Left colon (tissue), 2 donors: ENCODE measurements at regions of chr6 and their contacts with region 1.

Region 1: GRCh38 chr6:28981833-28982475 is 23.2 kb downstream of the ZNF311 start:
- DNase-seq: peak; percentile 79 to 80
- ATAC-seq: peak; percentile 56

Region 2: DNA sequence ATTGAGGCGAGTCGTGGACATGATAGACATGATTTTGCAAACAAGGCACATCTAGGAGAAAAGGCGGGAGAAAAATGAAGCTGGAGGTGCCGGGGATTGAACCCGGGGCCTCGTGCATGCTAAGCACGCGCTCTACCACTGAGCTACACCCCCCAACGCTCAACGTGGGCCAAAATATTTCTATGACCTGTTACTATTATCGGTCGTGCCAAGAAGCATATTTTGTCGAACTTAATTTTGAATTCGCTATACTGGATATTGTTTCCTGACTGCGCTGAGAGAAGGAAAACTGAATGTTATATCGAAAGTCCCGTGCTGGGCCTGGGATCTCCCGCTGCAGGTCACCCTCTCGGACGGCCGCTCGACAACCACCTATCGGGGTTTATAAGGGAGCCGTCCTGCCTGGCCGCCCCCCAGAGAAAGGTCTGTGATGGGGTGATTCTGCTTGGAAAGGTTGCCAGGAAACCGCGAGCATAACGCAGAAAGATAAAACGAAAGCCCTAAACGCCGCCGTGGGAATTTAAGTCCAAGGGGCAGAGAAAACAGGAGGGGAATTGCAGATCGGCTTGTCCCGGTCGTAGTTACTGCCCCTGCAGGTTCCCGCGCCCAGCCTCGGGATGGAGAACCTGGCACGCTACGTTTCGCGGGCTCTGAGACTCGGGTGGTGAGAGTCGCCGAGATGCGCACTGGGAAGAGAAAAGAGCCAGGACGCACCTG is 118.2 kb before region 1 on chr6:
- intact Hi-C with region 1: no loop called
- DNase-seq: peak; percentile 39 to 79
- ATAC-seq: peak; percentile 60

Region 3: GRCh38 chr6:28940858-28941680 is 40.9 kb before region 1 on chr6:
- intact Hi-C with region 1: loop called in 1 of 2 experiments (anchors 5 kb)
- DNase-seq: peak; percentile 70 to 72
- ATAC-seq: peak; percentile 72

Region 4: GRCh38 chr6:30541515-30542403 is 1559.8 kb after region 1 on chr6:
- intact Hi-C with region 1: no loop called
- DNase-seq: peak; percentile 67 to 73
- ATAC-seq: peak; percentile 88